Activated CD8-positive, alpha-beta T cell treated with anti-CD3 and anti-CD28 coated beads, Interleukin-2, amount 10 ng/mL, durations not matched to agents 7 days and 5 days (primary cell): ENCODE measurements at regions of chr20 and their contacts with region 1.

Region 1: DNA sequence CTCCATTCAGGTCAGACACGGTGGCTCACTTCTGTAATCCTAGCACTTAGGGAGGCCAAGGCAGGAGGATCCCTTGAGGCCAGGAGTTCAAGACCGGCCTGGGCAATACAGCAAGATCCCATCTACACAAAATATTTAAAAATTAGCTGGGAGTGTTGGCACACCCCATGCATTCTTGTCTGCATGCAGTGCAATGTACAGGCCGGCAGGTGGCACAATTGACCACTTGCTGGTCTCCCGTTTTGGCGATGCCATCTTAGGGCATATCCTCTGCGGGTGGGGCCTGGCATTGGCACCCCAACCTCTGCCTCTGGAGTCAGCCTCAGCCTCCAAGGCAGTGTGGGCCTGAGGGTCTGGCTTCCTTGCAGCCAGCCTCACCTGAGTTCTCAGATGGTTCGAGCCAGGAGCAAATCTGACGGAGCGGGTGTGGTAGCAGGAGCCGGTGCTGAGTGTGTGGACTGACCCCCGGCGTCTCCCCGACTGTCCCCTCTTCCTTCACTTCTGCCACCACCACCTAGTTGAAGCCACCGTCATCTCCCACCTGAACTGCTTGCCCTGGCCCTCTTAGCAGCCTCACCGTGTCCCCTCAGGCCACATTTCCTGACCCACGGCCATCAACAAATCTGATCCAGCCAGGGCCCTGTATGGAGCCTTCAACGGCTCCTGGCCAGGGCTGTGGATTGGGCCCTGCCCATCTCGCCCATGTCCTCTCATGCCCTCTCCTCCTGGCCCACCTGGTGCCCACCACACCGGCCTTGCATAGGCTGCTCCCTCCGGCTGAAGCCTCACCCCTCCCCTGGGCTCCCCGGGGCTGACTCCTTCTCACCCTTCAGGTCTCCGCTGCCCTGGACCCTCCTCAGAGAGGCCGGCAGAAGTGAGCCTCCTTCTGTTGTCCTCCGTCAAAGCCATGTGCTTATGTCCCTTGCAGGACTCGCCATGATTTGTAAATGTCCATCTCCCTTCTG is 44.0 kb downstream of the EFCAB8 start:
- DNase-seq: peak; percentile 81
- ATAC-seq: peak; percentile 78
- H3K4me3 Mint-ChIP-seq: no peak overlapping the region
- H3K27ac Mint-ChIP-seq: peak overlapping the region; percentile 74
- H3K4me1 Mint-ChIP-seq: peaks cover 36% of the 10 kb centered on the region
- H3K27me3 Mint-ChIP-seq: no peaks in the 10 kb centered on the region

Region 2: GRCh38 chr20:32789896-32790750 is 112.6 kb before region 1 on chr20:
- CTCF ChIA-PET with region 1: interaction called, 14 read pairs
- POLR2A ChIA-PET with region 1: no interaction called
- DNase-seq: peak; percentile 79
- ATAC-seq: peak; percentile 80
- H3K4me3 Mint-ChIP-seq: no peak overlapping the region
- H3K27ac Mint-ChIP-seq: no peak overlapping the region
- H3K4me1 Mint-ChIP-seq: peaks cover 24% of the 10 kb centered on the region
- H3K27me3 Mint-ChIP-seq: no peaks in the 10 kb centered on the region

Region 3: GRCh38 chr20:32888636-32889035 is 14.1 kb before region 1 on chr20:
- CTCF ChIA-PET with region 1: no interaction called
- POLR2A ChIA-PET with region 1: no interaction called
- DNase-seq: no peak
- ATAC-seq: no peak
- H3K4me3 Mint-ChIP-seq: no peak overlapping the region
- H3K27ac Mint-ChIP-seq: no peak overlapping the region
- H3K4me1 Mint-ChIP-seq: no peaks in the 10 kb centered on the region
- H3K27me3 Mint-ChIP-seq: no peaks in the 10 kb centered on the region

Region 4: GRCh38 chr20:33097001-33097400 is 194.3 kb after region 1 on chr20:
- CTCF ChIA-PET with region 1: interaction called, 32 read pairs
- POLR2A ChIA-PET with region 1: no interaction called
- DNase-seq: no peak
- ATAC-seq: no peak
- H3K4me3 Mint-ChIP-seq: no peak overlapping the region
- H3K27ac Mint-ChIP-seq: no peak overlapping the region
- H3K4me1 Mint-ChIP-seq: no peaks in the 10 kb centered on the region
- H3K27me3 Mint-ChIP-seq: peaks cover 3% of the 10 kb centered on the region